ENCODE measurements at regions of chr12 and their contacts with region 1.

Region 1: DNA sequence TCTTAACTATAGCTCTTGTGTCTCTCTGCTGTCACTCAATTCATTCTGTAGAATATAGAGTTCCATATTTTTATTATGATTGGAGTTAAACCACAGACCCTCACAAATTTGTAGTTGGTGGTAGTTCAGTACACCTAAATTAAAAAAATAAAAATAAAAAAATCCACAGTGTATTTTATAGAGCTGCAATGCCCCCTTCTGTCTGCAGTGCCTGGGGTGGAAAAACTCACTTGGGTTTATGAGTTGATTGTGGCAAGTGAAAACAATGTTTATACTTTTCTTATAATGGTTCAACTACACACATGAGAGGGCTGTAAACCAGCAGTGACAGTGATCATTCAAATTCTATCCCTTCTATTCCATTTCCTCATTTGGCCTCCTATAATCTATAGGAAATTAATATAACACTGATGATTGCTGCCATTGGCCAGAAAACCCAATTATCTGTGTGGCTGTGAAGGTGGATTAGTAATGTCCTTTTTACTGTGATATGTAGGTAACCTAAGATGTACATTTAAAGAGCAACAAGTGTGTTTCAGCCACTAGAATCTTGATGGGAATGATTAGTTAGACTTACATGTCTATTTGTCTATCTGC is 166.9 kb upstream of the LRIG3 start:
- DNase-seq: no peak
- ATAC-seq: no peak
- H3K4me3 ChIP-seq: no peak overlapping the region
- H3K27ac ChIP-seq: no peak overlapping the region
- H3K4me1 ChIP-seq: no peaks in the 10 kb centered on the region
- H3K27me3 ChIP-seq: no peaks in the 10 kb centered on the region
- CTCF ChIP-seq: peak in 9 of 12 donors; percentile 27 to 56 (median 38)
- POLR2A ChIP-seq: no peak

Region 2: GRCh38 chr12:58540480-58541299 is 546.5 kb before region 1 on chr12:
- intact Hi-C with region 1: loop called in 2 of 10 experiments (anchors 5 kb)
- DNase-seq: peak; percentile 43 to 67 (median 60)
- ATAC-seq: peak; percentile 82 to 91 (median 88)
- H3K4me3 ChIP-seq: no peak overlapping the region
- H3K27ac ChIP-seq: no peak overlapping the region
- H3K4me1 ChIP-seq: peaks cover 0 to 5% (median 0%) of the 10 kb centered on the region in 12 donors
- H3K27me3 ChIP-seq: no peaks in the 10 kb centered on the region
- CTCF ChIP-seq: peak; percentile 54 to 80 (median 71)
- POLR2A ChIP-seq: no peak

Region 3: GRCh38 chr12:58920102-58920960 is 166.8 kb before region 1 on chr12 and contains the start of gene LRIG3:
- intact Hi-C with region 1: loop called in 1 of 10 experiments (anchors 10 kb)
- DNase-seq: peak; percentile 89 to 94 (median 91)
- ATAC-seq: peak; percentile 91 to 96 (median 96)
- H3K4me3 ChIP-seq: peak within 1 kb of the TSS; percentile 67 to 93 (median 88)
- H3K27ac ChIP-seq: peak within 1 kb of the TSS; percentile 74 to 96 (median 93)
- H3K4me1 ChIP-seq: peaks cover 0 to 38% (median 16%) of the 10 kb centered on the region in 12 donors
- H3K27me3 ChIP-seq: no peaks in the 10 kb centered on the region
- CTCF ChIP-seq: peak in 4 of 12 donors; percentile 7 to 13 (median 10)
- POLR2A ChIP-seq: peak in 1 of 2 donors; percentile 25
- total RNA-seq, gene LRIG3: 3.7 to 8.9 (median 4.7) TPM